ENCODE measurements at regions of chrX and their contacts with region 1.

Region 1: DNA sequence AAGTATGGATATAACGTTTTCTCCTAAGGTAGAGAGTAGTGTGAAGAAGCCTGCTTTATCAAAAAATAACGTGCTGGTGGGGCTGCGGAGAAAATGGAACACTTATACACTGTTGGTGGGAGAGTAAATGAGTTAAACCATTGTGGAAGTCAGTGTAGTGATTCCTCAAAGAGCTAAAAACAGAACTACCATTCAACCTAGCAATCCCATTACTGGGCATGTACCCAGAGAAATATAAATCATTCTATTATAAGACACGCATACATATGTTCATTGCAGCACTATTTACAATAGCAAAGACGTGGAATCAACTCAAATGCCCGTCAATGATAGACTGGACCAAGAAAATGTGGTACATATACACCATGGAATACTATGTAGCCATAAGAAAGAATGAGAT is 196.4 kb downstream of the DMD start:
- DNase-seq: no peak
- H3K4me3 ChIP-seq: no peak overlapping the region
- H3K27ac ChIP-seq: no peak overlapping the region
- H3K4me1 ChIP-seq: no peaks in the 10 kb centered on the region
- H3K27me3 ChIP-seq: no peaks in the 10 kb centered on the region
- CTCF ChIP-seq: no peak
- EP300 ChIP-seq: no peak
- POLR2A ChIP-seq: no peak

Region 2: DNA sequence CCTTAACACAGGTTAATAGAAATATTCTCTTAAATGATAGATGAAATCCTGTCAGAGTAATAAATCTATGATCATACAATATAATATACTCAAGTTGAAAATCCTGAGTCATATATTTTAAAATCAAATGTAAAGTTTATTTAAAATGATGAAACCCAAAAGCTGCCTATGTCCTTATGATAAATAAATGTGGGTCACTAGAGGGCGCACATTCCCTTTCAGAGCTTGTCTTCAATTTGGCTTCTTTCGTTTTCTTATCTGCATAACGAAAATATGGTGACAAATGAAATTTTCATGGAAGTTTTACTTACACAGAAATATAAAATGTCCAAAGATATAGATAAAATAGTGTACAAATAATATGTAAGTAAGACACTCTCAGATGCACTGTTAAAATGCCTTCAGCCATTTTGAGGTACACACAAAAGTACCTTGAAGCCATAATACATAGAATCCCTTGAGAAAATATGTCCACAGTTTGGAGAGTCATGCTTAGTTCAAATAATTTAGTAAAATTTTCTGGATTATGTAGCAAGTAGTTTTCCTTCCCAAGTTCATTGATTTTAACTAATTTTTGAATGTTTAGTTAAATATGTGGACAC is 484.0 kb before region 1 on chrX:
- intact Hi-C with region 1: loop called (anchors 5 kb)
- DNase-seq: no peak
- H3K4me3 ChIP-seq: peak overlapping the region in 1 of 4 donors; percentile 30
- H3K27ac ChIP-seq: no peak overlapping the region
- H3K4me1 ChIP-seq: no peaks in the 10 kb centered on the region
- H3K27me3 ChIP-seq: no peaks in the 10 kb centered on the region
- CTCF ChIP-seq: peak in 3 of 4 experiments; percentile 17 to 40 (median 20)
- EP300 ChIP-seq: no peak
- POLR2A ChIP-seq: no peak

Measured in sigmoid colon (tissue), 7 donors.